ENCODE measurements at regions of chr11 and their contacts with region 1.

Region 1: DNA sequence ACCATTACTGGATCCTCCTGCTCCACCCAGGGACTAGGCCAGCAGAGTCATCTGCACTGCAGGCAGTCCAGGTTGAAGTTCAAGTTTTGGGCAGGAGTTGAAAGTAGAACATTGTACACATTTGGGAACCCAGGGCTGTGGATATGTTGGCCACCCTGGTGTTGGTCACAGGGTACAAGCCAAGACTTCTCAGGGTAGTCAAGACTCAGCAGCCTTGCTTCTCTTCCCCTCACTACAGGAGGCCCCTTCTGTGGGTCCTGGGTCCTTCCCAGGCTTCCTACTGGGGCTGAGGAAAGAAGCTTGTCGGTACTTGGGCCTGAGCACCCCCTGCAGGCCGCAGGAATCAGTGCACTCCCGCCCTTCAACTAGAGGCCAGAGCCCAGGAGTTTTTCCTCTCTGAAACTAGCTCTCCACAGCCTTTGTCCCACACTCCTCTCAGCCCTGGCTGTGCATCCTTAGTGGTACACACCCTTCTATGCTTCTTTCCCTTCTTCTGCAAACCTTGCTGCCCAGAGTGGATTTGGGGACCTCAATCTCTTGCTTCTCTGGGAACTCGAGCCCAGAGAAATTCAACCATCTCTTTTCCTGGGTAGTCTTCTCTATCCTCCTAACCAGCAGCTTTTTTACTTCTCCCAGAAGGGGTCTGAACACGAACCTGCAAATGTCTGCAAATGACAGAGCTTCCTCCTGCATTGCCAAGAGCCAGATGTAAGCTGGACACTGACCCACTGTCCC is 2.6 kb upstream of the HPX start:
- DNase-seq: peak; percentile 69
- ATAC-seq: peak; percentile 85
- H3K4me3 Mint-ChIP-seq: no peak overlapping the region
- H3K27ac Mint-ChIP-seq: no peak overlapping the region
- H3K4me1 Mint-ChIP-seq: no peaks in the 10 kb centered on the region
- H3K27me3 Mint-ChIP-seq: no peaks in the 10 kb centered on the region

Region 2: GRCh38 chr11:6389921-6390724 is 53.3 kb before region 1 on chr11 and contains the start of gene SMPD1:
- CTCF ChIA-PET with region 1: interaction called, 571 read pairs
- DNase-seq: peak; percentile 97
- ATAC-seq: peak; percentile 92
- H3K4me3 Mint-ChIP-seq: peak within 1 kb of the TSS; percentile 91
- H3K27ac Mint-ChIP-seq: peak within 1 kb of the TSS; percentile 94
- H3K4me1 Mint-ChIP-seq: peaks cover 38% of the 10 kb centered on the region
- H3K27me3 Mint-ChIP-seq: no peaks in the 10 kb centered on the region
- total RNA-seq, gene SMPD1: 38.9 to 41.9 TPM

Region 3: GRCh38 chr11:6419009-6419631 is 24.3 kb before region 1 on chr11 and contains the start of gene APBB1:
- CTCF ChIA-PET with region 1: interaction called, 50 read pairs
- DNase-seq: peak; percentile 72
- ATAC-seq: peak; percentile 79
- H3K4me3 Mint-ChIP-seq: no peak within 1 kb of the TSS
- H3K27ac Mint-ChIP-seq: peak within 1 kb of the TSS; percentile 30
- H3K4me1 Mint-ChIP-seq: peaks cover 6% of the 10 kb centered on the region
- H3K27me3 Mint-ChIP-seq: peaks cover 28% of the 10 kb centered on the region
- total RNA-seq, gene APBB1: 38.7 to 43.4 TPM

Region 4: GRCh38 chr11:6473481-6474422 is 30.3 kb after region 1 on chr11 and contains the start of gene TRIM3:
- CTCF ChIA-PET with region 1: interaction called, 19 read pairs
- DNase-seq: peak; percentile 75
- ATAC-seq: peak; percentile 82
- H3K4me3 Mint-ChIP-seq: peak within 1 kb of the TSS; percentile 80
- H3K27ac Mint-ChIP-seq: peak within 1 kb of the TSS; percentile 31
- H3K4me1 Mint-ChIP-seq: peaks cover 12% of the 10 kb centered on the region
- H3K27me3 Mint-ChIP-seq: no peaks in the 10 kb centered on the region
- total RNA-seq, gene TRIM3: 4.8 to 5.1 TPM

Region 5: DNA sequence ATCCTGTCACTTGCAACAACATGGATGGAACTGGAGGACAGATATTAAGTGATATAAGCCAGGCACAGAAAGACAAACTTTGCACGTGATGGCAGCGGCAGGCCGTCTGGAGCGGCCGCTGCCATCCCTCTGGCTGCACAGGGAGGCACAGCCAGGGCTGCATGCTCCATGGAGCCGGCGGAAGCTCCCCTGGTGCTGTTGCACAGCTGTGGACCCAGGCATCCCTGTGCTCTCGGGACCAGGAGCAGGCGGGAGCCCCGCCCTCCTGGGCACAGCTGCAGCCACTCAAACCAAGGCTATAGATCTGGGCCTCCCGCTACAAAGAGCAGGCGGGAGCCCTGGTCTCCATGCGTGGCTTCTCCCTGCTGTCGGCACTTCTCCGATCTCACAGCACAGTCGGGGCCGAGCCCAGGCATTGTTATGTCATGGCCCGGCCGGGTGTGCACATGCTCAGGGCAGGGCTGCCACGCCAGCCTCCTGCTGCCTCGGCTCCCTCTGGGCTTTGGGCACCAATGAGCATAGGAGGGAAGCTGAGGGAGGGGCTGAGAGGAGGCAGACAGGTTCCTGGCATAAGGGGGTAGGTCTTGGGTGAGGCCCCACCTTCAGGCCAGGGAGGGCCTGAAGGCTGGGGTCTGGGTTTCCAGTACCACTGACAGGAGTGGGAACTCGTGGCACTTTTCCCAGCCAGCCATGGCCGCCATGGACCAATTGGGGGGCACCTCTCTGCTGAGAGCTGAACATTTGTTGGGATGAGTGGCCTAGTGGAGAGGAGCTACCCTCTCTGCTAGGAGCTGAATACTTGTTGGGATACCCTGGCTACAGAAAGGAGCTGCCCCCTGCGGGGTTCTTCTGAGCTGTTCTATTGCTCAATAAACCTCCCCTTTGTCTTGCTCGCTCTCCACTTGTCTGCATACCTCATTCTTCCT is 143.3 kb after region 1 on chr11:
- CTCF ChIA-PET with region 1: no interaction called
- DNase-seq: peak; percentile 36
- ATAC-seq: no peak
- H3K4me3 Mint-ChIP-seq: no peak overlapping the region
- H3K27ac Mint-ChIP-seq: no peak overlapping the region
- H3K4me1 Mint-ChIP-seq: no peaks in the 10 kb centered on the region
- H3K27me3 Mint-ChIP-seq: no peaks in the 10 kb centered on the region

Measured in activated CD8-positive, alpha-beta memory T cell treated with anti-CD3 and anti-CD28 coated beads, Interleukin-2, amount 10 ng/mL, durations not matched to agents 7 days and 5 days (primary cell).